ENCODE measurements at regions of chr22 and their contacts with region 1.

Region 1: DNA sequence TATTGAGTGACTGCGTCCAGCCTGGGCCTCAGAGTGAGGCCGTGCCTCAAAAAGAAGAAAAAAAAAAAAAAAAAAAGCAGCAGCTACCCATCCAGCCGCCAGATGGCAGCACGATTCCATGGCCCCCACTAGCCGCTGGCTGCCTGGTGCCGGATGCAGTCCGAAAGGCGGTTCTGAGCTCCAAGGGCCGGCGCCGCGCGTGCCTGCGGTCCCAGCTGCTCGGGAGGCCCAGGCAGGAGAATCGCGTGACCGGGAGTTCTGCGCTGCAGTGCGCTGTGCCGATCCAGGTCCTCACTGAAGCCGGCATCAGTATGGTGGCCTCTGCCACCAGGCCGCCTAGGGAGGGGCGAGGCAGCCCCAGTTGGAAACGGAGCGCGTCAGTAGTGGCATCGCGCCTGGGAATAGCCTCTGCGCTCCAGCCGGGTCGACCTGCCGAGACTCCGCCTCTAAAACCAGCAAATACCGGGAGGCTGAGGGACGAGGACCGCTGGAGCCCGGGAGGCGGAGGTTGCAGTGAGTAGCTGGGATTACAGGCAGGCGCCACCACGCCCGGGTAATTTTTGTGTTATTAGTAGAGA is 19.3 kb downstream of the SCARF2 start:
- DNase-seq: peak; percentile 83 to 91 (median 85)
- ATAC-seq: peak; percentile 80 to 92 (median 90)
- H3K4me3 ChIP-seq: peak overlapping the region in 9 of 12 donors; percentile 22 to 55 (median 46)
- H3K27ac ChIP-seq: peak overlapping the region in 1 of 12 donors; percentile 71
- H3K4me1 ChIP-seq: peaks cover 0 to 15% (median 9%) of the 10 kb centered on the region in 12 donors
- H3K27me3 ChIP-seq: no peaks in the 10 kb centered on the region
- CTCF ChIP-seq: peak; percentile 81 to 98 (median 88)
- POLR2A ChIP-seq: no peak

Region 2: DNA sequence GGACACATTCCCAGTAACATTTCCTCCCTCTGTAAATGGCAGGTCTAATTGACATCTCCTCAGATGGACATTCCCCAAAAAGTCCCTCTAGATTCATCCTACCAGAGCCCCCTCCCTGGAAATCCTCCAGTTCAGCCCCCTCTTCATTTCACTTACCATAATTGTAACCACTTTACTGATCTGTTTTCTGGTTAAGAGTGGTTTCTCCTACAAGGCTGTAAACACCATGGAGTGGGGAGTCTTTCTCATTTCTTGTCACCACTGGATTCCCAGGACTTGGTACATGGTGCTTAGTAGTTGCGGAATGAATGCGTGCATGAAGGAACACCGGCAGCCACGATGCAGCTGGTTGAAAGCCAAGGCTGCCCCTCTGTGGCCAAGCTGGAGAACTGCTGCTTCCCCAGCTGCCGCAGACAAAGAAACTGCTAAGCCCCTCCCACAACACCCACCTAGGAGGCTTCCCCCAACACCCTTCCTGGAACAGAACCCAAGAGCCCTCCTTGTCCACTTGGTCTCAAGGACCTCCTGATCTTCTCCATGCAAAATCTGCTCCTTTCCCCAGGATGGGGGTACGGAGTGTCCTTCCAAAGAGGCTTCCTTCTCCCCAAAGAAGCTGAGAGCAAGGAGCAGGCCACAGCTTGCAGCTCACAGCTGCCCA is 37.9 kb after region 1 on chr22:
- intact Hi-C with region 1: loop called (anchors 1 to 2 kb)
- DNase-seq: peak; percentile 76 to 88 (median 80)
- ATAC-seq: peak; percentile 69 to 92 (median 86)
- H3K4me3 ChIP-seq: no peak overlapping the region
- H3K27ac ChIP-seq: no peak overlapping the region
- H3K4me1 ChIP-seq: peaks cover 0 to 18% (median 0%) of the 10 kb centered on the region in 12 donors
- H3K27me3 ChIP-seq: no peaks in the 10 kb centered on the region
- CTCF ChIP-seq: peak; percentile 79 to 98 (median 91)
- POLR2A ChIP-seq: no peak

Region 3: DNA sequence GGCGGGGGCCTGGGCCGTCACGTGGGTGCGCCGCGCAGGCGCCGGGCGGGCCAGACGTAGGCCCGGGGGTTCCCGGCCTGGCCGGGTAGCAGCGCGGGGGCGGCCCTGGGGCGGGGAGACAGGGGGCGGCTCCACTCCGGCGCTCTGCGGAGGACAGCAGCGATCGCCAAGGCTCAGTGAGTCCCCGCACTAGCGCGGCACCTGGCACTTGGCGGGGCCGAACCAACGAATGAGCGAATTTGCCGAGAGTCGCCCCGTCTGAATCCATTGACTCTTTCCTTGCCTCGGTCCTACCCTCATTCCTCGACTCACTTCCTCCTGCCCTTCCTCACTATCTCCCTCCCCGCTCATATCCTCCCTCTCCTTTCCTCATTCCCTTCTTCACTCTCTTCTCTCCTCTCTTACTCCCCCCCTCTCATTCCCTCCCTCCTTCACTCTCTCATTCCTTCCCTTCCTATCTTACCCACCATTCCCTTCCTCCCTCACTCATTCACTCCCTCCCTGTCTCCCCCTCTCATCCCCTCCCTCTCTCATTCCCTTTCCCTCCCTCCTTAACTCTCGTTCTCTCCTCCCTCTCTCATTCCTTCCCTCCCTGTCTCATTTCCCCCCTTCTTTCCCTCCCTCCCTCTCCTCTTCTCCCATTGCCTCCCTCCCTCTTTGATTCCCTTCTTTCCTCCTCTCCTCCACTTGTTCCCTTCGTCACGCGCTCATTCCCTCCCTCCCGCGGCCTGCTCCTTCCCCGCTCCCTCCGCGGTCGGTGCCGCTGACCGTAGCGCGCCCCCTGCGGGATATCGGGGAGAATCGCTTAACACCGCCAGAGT is 77.8 kb after region 1 on chr22:
- intact Hi-C with region 1: loop called in 9 of 10 experiments (anchors 2 to 5 kb)
- DNase-seq: peak; percentile 94 to 96 (median 94)
- ATAC-seq: peak; percentile 94 to 97 (median 97)
- H3K4me3 ChIP-seq: peak overlapping the region; percentile 69 to 97 (median 82)
- H3K27ac ChIP-seq: peak overlapping the region; percentile 79 to 99 (median 94)
- H3K4me1 ChIP-seq: peaks cover 0 to 23% (median 16%) of the 10 kb centered on the region in 12 donors
- H3K27me3 ChIP-seq: no peaks in the 10 kb centered on the region
- CTCF ChIP-seq: peak; percentile 79 to 96 (median 86)
- POLR2A ChIP-seq: peak in 1 of 2 donors; percentile 56

Measured in heart left ventricle (tissue), 16 donors.